Mammary epithelial cell (primary cell): ENCODE measurements at regions of chr15 and their contacts with region 1.

Region 1: GRCh38 chr15:55917881-55918296 is 75.5 kb downstream of the NEDD4 start:
- DNase-seq: peak; percentile 86
- H3K4me3 ChIP-seq: peak overlapping the region in 1 of 3 experiments; percentile 25
- H3K27ac ChIP-seq: peak overlapping the region; percentile 92
- H3K4me1 ChIP-seq: peaks cover 28% of the 10 kb centered on the region
- H3K27me3 ChIP-seq: no peaks in the 10 kb centered on the region
- CTCF ChIP-seq: peak; percentile 65 to 67

Region 2: DNA sequence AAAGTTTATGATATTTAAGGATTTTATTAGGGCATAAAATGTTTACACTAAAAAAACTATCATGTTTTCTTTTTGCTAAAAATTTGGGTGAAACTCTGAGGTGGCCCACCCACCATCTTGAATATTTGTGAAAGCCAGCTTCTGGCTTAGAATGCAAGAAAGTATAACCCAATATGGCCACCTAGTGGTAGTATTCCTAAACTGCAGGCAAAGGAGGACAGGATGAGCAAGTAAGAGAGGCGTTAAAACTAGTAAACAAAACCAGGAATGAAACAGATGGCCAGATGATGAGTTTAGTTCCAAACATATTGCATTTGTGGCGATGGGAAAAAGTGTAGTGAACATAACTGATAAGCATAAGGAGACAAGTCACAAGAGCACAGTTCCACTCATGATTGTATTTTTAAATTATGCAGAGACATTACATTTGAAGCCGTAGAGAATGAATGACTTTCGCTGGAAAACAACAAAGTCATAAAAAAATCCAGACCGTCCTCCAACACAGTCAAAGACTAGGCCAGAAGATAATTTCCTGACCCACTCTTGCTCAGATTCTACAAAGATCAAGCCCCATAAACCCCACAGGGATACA is 71.7 kb before region 1 on chr15:
- CTCF ChIA-PET with region 1: no interaction called
- dilution Hi-C with region 1: no loop called
- in situ Hi-C with region 1: no loop called
- intact Hi-C with region 1: loop called (anchors 5 kb)
- DNase-seq: peak; percentile 65
- H3K4me3 ChIP-seq: no peak overlapping the region
- H3K27ac ChIP-seq: no peak overlapping the region
- H3K4me1 ChIP-seq: no peaks in the 10 kb centered on the region
- H3K27me3 ChIP-seq: no peaks in the 10 kb centered on the region
- CTCF ChIP-seq: peak; percentile 86 to 94

Region 3: GRCh38 chr15:55868707-55869106 is 49.2 kb before region 1 on chr15:
- CTCF ChIA-PET with region 1: no interaction called
- dilution Hi-C with region 1: no loop called
- in situ Hi-C with region 1: no loop called
- intact Hi-C with region 1: loop called (anchors 5 kb)
- DNase-seq: no peak
- H3K4me3 ChIP-seq: no peak overlapping the region
- H3K27ac ChIP-seq: no peak overlapping the region
- H3K4me1 ChIP-seq: no peaks in the 10 kb centered on the region
- H3K27me3 ChIP-seq: no peaks in the 10 kb centered on the region
- CTCF ChIP-seq: no peak

Region 4: GRCh38 chr15:55897560-55898336 is 20.1 kb before region 1 on chr15:
- CTCF ChIA-PET with region 1: interaction called, 10 read pairs
- dilution Hi-C with region 1: no loop called
- in situ Hi-C with region 1: no loop called
- intact Hi-C with region 1: loop called (anchors 1 kb)
- DNase-seq: peak; percentile 79
- H3K4me3 ChIP-seq: no peak overlapping the region
- H3K27ac ChIP-seq: peak overlapping the region; percentile 77
- H3K4me1 ChIP-seq: peaks cover 14% of the 10 kb centered on the region
- H3K27me3 ChIP-seq: no peaks in the 10 kb centered on the region
- CTCF ChIP-seq: peak; percentile 91 to 99